Activated B cell treated with CpG ODN at 0.5 μM for 24 hours (primary cell): ENCODE measurements at regions of chr5 and their contacts with region 1.

Region 1: DNA sequence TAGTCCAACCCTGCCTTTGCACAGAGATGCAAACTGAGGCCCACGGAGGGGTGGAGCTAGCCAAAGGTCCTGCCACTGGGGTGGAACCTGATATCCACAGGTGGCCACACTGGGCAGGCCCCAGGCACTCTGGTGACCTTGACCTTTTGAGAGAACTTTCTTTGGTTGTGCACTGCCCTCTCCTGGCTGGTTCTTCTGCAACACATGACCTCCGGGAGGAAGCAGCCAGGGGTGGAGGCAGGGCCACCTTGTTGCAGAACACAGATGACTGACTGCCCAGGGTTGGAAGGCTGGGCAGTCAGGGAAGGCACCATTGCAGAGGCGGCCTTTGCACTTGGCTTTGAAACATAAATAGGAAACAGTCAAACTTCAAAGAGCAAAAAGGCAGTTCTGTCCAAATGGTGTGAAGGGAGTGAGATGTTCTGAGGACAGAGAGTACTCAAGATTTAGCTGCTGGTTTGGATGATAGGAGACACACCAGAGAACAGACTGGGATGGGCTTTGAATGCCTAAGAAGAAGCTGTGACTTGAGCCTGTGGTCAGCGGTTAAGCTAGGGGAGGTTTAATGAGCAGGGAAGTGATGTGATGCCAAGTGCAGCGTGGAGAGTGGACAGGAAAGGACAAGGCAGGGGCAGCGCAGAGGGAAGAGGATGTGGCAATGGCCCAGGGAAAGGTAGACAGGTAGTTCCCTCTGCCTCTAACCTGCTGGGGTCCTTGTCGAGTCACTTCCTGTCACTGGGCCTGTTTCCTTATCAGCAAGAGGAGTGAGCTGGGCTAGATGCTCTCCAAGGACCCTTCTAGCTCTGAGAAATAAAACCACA is 6.8 kb upstream of the TCOF1 start:
- DNase-seq: no peak
- ATAC-seq: peak; percentile 84
- H3K4me3 Mint-ChIP-seq: no peak overlapping the region
- H3K27ac Mint-ChIP-seq: peak overlapping the region; percentile 64
- H3K4me1 Mint-ChIP-seq: peaks cover 11% of the 10 kb centered on the region
- H3K27me3 Mint-ChIP-seq: no peaks in the 10 kb centered on the region
- CTCF ChIP-seq: no peak

Region 2: DNA sequence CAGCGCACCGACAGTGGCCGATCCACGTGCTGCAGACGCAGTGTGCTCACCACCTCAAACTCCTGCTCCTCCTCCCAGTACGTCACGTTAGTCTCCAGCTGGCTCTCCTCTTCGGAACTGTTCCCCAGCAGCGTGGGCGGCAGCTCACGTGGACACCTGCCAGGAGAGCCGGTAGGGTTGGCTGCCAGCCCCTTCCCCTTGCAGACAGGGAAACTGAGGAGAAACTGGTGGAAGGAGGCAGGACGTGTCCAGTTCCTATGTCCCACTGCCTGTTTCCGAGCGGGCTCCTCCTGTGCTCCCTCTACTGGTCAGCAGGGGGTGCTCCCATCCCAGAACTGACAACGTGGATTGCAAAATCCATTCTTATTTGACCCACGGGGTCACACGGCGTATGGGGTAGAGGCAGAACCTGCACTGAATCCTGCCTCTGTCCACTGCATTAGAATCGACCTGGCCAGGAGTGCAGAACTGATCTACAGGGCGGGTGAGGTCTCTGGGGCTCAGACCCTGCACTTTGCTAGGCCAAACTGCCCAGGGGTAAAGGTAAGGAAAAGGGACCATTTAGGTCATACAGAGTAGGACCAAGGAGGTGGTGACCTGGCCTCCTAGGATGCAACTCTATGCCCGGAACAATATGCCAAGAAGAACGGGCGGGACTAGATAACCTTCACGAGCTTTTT is 220.8 kb before region 1 on chr5:
- CTCF ChIA-PET with region 1: no interaction called
- POLR2A ChIA-PET with region 1: no interaction called
- intact Hi-C with region 1: loop called (anchors 1 kb)
- DNase-seq: peak; percentile 29
- ATAC-seq: peak; percentile 84
- H3K4me3 Mint-ChIP-seq: no peak overlapping the region
- H3K27ac Mint-ChIP-seq: no peak overlapping the region
- H3K4me1 Mint-ChIP-seq: no peaks in the 10 kb centered on the region
- H3K27me3 Mint-ChIP-seq: no peaks in the 10 kb centered on the region
- CTCF ChIP-seq: peak; percentile 50

Region 3: DNA sequence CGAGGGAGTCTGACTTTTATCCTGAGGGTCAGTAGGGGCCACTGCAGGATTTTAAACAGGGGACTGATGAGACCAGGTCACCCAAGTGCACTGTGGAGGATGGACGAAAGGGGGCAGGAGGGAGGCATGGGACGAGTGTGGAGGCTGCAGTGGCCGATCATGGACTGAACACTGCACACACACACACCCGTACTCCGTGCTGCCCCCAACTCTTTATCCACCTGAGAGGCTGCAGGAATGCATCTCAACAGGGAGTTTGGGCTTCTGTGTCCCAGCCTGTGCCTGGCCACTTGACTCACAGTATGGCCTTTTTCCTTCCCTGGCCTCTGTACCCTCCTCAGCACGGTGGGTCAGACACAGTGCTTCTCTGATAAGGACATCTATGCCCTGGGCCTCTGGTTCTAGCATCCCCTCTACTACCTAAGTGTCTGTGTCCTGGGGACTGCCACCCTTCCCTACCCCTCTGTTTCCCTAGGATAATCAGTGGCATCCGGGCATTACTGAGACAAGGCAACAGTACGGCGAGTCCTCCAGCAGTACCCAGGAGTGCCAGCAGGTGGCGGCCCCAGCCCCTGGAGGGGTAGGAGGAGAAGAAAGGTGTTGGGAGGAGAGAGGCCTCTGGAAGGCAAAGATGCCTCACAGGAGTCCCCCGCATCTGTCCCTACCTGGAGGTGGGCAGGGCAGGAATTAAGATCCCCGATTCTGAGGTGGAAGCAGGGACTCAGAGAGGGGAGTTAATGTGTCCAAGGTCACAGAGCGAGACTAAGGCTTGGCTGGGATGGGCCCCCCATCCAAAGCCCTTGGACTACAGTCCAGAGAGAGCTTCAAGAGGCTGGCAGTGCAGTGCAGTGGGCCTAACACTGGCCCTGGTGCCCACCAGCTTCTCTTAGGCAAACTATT is 189.2 kb before region 1 on chr5:
- CTCF ChIA-PET with region 1: no interaction called
- POLR2A ChIA-PET with region 1: no interaction called
- intact Hi-C with region 1: loop called (anchors 1 kb)
- DNase-seq: peak; percentile 70
- ATAC-seq: peak; percentile 88
- H3K4me3 Mint-ChIP-seq: no peak overlapping the region
- H3K27ac Mint-ChIP-seq: no peak overlapping the region
- H3K4me1 Mint-ChIP-seq: peaks cover 19% of the 10 kb centered on the region
- H3K27me3 Mint-ChIP-seq: peaks cover 8% of the 10 kb centered on the region
- CTCF ChIP-seq: peak; percentile 65

Region 4: GRCh38 chr5:151328734-151329133 is 978.0 kb after region 1 on chr5:
- CTCF ChIA-PET with region 1: no interaction called
- POLR2A ChIA-PET with region 1: no interaction called
- intact Hi-C with region 1: no loop called
- DNase-seq: no peak
- ATAC-seq: no peak
- H3K4me3 Mint-ChIP-seq: no peak overlapping the region
- H3K27ac Mint-ChIP-seq: no peak overlapping the region
- H3K4me1 Mint-ChIP-seq: no peaks in the 10 kb centered on the region
- H3K27me3 Mint-ChIP-seq: no peaks in the 10 kb centered on the region
- CTCF ChIP-seq: no peak